Ascending aorta (tissue), 2 donors: ENCODE measurements at regions of chr12 and their contacts with region 1.

Region 1: GRCh38 chr12:105382771-105383622 is 52.5 kb downstream of the C12orf75 start:
- DNase-seq: no peak
- H3K4me3 ChIP-seq: peak overlapping the region; percentile 18 to 59
- H3K27ac ChIP-seq: peak overlapping the region; percentile 54 to 58
- H3K4me1 ChIP-seq: peaks cover 0 to 6% of the 10 kb centered on the region in 2 donors
- H3K27me3 ChIP-seq: no peaks in the 10 kb centered on the region
- CTCF ChIP-seq: peak; percentile 71 to 83 (median 83)

Region 2: DNA sequence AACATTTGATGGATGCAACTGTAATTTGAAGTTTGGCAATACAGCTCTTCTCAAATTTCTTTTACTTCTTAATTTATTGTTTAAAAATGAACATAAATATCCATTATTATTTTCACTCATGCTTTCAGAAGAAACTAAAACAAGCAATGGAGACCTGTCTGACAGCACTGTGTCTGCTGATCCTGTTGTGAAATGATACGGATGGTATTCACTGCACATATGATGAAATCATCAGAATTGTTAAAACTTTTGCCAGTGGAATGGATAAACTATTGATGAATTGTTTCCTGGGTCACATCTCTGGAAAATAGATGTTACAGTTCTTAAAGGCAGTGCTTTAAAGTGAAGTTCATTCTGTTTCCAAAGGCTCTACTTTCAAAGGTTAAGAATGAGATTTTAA is 216.3 kb before region 1 on chr12:
- intact Hi-C with region 1: loop called (anchors 5 kb)
- DNase-seq: no peak
- H3K4me3 ChIP-seq: no peak overlapping the region
- H3K27ac ChIP-seq: no peak overlapping the region
- H3K4me1 ChIP-seq: no peaks in the 10 kb centered on the region
- H3K27me3 ChIP-seq: no peaks in the 10 kb centered on the region
- CTCF ChIP-seq: no peak

Region 3: DNA sequence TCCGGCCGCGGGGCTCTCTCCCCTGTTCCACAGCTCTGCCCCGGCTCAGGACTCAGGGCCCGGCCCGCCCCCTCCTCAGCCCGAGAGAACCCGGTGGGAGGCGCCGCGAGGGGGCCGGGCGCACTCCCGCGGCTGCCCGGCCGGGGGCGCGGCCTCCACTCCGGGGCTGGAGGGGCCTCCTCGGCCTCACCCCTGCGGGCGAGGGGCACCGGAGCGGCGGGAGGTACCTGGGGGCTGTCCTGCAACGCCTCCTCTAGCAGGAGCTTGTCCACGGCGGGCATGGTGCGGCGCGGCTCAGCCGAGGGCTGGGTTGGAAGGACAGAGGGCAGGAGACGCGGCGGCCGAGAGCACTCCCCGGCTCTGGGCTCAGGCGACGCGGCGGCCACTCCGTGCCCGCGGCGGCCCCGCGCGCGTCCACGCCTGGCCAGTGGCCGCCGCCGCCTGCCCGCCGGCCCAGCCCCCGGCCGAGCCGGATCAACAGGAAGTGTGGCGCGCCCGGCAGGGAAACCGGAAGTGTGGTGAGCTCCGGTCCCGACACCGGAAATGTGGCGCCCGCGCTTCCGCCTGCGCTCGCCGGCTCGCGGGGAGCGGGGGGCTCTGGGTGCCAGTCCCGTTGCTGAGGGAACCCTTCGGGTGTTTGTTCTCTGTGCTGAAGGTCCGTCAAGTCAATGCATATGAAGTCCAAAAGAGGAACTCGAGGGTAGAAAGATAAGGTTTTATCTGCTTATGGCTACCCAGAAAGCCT is 147.1 kb before region 1 on chr12 and contains the start of gene APPL2:
- intact Hi-C with region 1: loop called (anchors 2 kb)
- DNase-seq: peak; percentile 51 to 94
- H3K4me3 ChIP-seq: peak within 1 kb of the TSS; percentile 66 to 92
- H3K27ac ChIP-seq: peak within 1 kb of the TSS; percentile 82 to 95
- H3K4me1 ChIP-seq: peaks cover 15 to 28% of the 10 kb centered on the region in 2 donors
- H3K27me3 ChIP-seq: no peaks in the 10 kb centered on the region
- CTCF ChIP-seq: peak; percentile 11 to 55 (median 44)
- total RNA-seq, gene APPL2: 4.6 TPM

Region 4: GRCh38 chr12:105253882-105254513 is 129.0 kb before region 1 on chr12:
- intact Hi-C with region 1: no loop called
- DNase-seq: no peak
- H3K4me3 ChIP-seq: no peak overlapping the region
- H3K27ac ChIP-seq: peak overlapping the region; percentile 54 to 83
- H3K4me1 ChIP-seq: peaks cover 7 to 41% of the 10 kb centered on the region in 2 donors
- H3K27me3 ChIP-seq: no peaks in the 10 kb centered on the region
- CTCF ChIP-seq: no peak

Region 5: DNA sequence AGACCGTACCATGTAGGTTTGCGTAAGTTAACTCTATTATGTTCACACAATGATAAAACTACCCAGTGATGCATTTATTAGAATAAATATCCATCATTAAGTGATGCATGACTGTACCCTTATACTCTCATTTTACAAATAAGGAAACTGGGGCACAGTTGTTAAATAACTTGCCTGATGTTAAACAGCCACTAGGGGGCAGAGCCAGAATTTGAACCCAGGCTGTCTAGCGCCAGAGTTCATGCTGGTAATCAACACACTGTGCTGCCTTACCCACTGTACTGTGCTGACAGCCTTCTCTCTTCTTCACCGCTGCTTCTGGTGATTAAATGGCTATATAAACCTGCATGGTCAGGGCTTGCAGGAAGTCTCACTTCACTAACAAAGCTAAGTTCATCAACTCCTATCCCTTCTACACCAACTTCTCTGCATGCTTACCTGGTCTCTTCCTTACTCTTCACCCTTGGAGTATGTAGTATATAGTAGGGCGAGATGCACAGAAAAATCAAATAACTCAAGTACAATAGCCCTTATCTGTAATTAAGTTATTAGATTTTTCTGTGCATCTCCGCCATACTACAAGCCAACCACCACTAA is 103.4 kb before region 1 on chr12:
- intact Hi-C with region 1: loop called (anchors 2 kb)
- DNase-seq: no peak
- H3K4me3 ChIP-seq: no peak overlapping the region
- H3K27ac ChIP-seq: no peak overlapping the region
- H3K4me1 ChIP-seq: no peaks in the 10 kb centered on the region
- H3K27me3 ChIP-seq: no peaks in the 10 kb centered on the region
- CTCF ChIP-seq: peak; percentile 46 to 59 (median 54)

Region 6: DNA sequence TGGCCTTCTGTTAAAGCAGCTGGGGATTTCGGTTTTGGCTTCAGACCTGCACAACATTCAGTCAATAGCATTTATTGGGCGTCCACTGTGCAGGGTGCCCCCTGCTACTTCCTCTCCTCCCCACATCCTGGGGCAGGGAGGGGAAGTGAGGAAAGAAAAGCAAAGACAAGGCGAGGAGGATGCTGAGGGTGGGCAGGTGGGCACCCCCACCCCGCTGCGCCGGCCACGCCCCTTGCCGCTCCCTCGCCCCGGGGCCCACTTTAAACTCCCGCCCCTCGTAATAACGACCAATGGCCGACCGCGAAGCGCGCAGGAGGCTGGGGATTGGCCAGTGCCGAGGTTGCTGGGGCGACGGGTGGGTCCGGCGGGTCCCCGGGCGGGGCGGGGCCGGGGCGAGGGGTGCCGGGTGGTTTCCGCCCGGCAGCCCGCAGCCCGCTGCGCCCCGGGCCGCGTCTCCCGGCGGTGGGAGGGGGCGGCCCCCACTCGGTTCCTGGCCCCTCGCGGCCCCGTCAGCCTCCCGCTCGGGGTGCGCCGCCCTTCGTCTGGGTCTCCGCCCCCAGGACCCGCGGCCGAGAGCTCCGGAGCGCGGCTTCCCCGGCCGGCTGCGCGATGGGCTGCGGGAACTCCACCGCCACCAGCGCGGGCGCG is 52.6 kb before region 1 on chr12 and contains the start of gene C12orf75:
- intact Hi-C with region 1: loop called (anchors 2 kb)
- DNase-seq: peak; percentile 37 to 88
- H3K4me3 ChIP-seq: peak within 1 kb of the TSS; percentile 75 to 87
- H3K27ac ChIP-seq: peak within 1 kb of the TSS; percentile 62 to 83
- H3K4me1 ChIP-seq: peaks cover 0 to 19% of the 10 kb centered on the region in 2 donors
- H3K27me3 ChIP-seq: no peaks in the 10 kb centered on the region
- CTCF ChIP-seq: no peak
- total RNA-seq, gene C12orf75: 56.5 TPM

Region 7: GRCh38 chr12:105418232-105418631 is 35.2 kb after region 1 on chr12:
- intact Hi-C with region 1: no loop called
- DNase-seq: no peak
- H3K4me3 ChIP-seq: no peak overlapping the region
- H3K27ac ChIP-seq: peak overlapping the region; percentile 47 to 55
- H3K4me1 ChIP-seq: no peaks in the 10 kb centered on the region
- H3K27me3 ChIP-seq: no peaks in the 10 kb centered on the region
- CTCF ChIP-seq: no peak

Region 8: DNA sequence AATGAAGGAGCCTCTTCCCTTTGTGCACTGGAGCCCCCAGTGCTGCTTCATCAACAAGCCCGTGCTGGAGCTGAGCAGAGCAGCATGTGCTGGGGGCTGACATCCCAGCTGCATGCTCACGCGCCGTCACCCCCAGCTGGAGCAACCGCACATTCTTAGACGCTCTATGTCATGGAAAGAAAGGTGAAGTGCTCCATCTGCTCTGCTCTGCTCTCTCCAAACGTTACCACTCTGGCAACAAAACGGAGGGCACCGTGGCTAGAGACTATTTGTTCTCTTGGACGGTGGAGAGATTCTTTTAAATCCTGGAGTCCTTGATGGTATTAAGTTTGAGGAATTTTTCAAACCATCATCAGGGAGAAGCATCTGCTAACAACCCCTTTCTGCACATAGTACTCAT is 155.9 kb after region 1 on chr12:
- intact Hi-C with region 1: no loop called
- DNase-seq: no peak
- H3K4me3 ChIP-seq: no peak overlapping the region
- H3K27ac ChIP-seq: no peak overlapping the region
- H3K4me1 ChIP-seq: no peaks in the 10 kb centered on the region
- H3K27me3 ChIP-seq: no peaks in the 10 kb centered on the region
- CTCF ChIP-seq: no peak